Activated naive CD4-positive, alpha-beta T cell treated with anti-CD3 and anti-CD28 coated beads, Interleukin-2, amount 10 ng/mL, durations not matched to agents 7 days and 5 days (primary cell): ENCODE measurements at regions of chr17 and their contacts with region 1.

Region 1: GRCh38 chr17:42112552-42113176 is at the start of gene DHX58:
- DNase-seq: peak; percentile 92
- H3K4me3 Mint-ChIP-seq: peak within 1 kb of the TSS; percentile 90
- H3K27ac Mint-ChIP-seq: peak within 1 kb of the TSS; percentile 95
- H3K4me1 Mint-ChIP-seq: peaks cover 66% of the 10 kb centered on the region
- H3K27me3 Mint-ChIP-seq: no peaks in the 10 kb centered on the region

Region 2: GRCh38 chr17:41966463-41967140 is 146.1 kb before region 1 on chr17 and contains the start of gene CNP:
- CTCF ChIA-PET with region 1: interaction called, 34 read pairs
- DNase-seq: peak; percentile 93
- H3K4me3 Mint-ChIP-seq: peak within 1 kb of the TSS; percentile 82
- H3K27ac Mint-ChIP-seq: peak within 1 kb of the TSS; percentile 89
- H3K4me1 Mint-ChIP-seq: peaks cover 46% of the 10 kb centered on the region
- H3K27me3 Mint-ChIP-seq: peaks cover 29% of the 10 kb centered on the region

Region 3: GRCh38 chr17:42050393-42051012 is 62.2 kb before region 1 on chr17 and contains the start of gene C17orf113:
- CTCF ChIA-PET with region 1: no interaction called
- DNase-seq: peak; percentile 60
- H3K4me3 Mint-ChIP-seq: peak within 1 kb of the TSS; percentile 65
- H3K27ac Mint-ChIP-seq: no peak within 1 kb of the TSS
- H3K4me1 Mint-ChIP-seq: peaks cover 10% of the 10 kb centered on the region
- H3K27me3 Mint-ChIP-seq: peaks cover 81% of the 10 kb centered on the region

Region 4: GRCh38 chr17:42067351-42068091 is 45.1 kb before region 1 on chr17:
- CTCF ChIA-PET with region 1: interaction called, 58 read pairs
- DNase-seq: peak; percentile 83
- H3K4me3 Mint-ChIP-seq: no peak overlapping the region
- H3K27ac Mint-ChIP-seq: no peak overlapping the region
- H3K4me1 Mint-ChIP-seq: peaks cover 36% of the 10 kb centered on the region
- H3K27me3 Mint-ChIP-seq: peaks cover 60% of the 10 kb centered on the region

Region 5: GRCh38 chr17:42101513-42102319 is 10.9 kb before region 1 on chr17:
- CTCF ChIA-PET with region 1: interaction called, 11 read pairs
- DNase-seq: peak; percentile 80
- H3K4me3 Mint-ChIP-seq: no peak overlapping the region
- H3K27ac Mint-ChIP-seq: no peak overlapping the region
- H3K4me1 Mint-ChIP-seq: peaks cover 11% of the 10 kb centered on the region
- H3K27me3 Mint-ChIP-seq: peaks cover 29% of the 10 kb centered on the region